WTC11 (cell line): ENCODE measurements at regions of chr16 and their contacts with region 1.

Region 1: GRCh38 chr16:56625140-56625942 is at the start of gene MT1E:
- DNase-seq: peak; percentile 67
- ATAC-seq: peak; percentile 77
- H3K4me3 Mint-ChIP-seq: peak within 1 kb of the TSS; percentile 77
- H3K27ac Mint-ChIP-seq: no peak within 1 kb of the TSS
- H3K4me1 Mint-ChIP-seq: peaks cover 49% of the 10 kb centered on the region
- H3K27me3 Mint-ChIP-seq: peaks cover 98% of the 10 kb centered on the region
- CTCF ChIP-seq: no peak
- total RNA-seq, gene MT1E: 92.7 to 114 TPM (median 103 TPM) in 3 replicates

Region 2: GRCh38 chr16:56608043-56608875 is 17.1 kb before region 1 on chr16 and contains the start of gene MT2A:
- CTCF ChIA-PET with region 1: interaction called, 7 read pairs
- POLR2A ChIA-PET with region 1: interaction called, 68 read pairs
- DNase-seq: peak; percentile 89
- ATAC-seq: peak; percentile 85
- H3K4me3 Mint-ChIP-seq: peak within 1 kb of the TSS; percentile 79
- H3K27ac Mint-ChIP-seq: peak within 1 kb of the TSS; percentile 18; the same call in 1 of the 2 replicates
- H3K4me1 Mint-ChIP-seq: peaks cover 43% of the 10 kb centered on the region
- H3K27me3 Mint-ChIP-seq: peaks cover 68% of the 10 kb centered on the region
- CTCF ChIP-seq: no peak
- total RNA-seq, gene MT2A: 139 to 173 TPM (median 149 TPM) in 3 replicates

Region 3: DNA sequence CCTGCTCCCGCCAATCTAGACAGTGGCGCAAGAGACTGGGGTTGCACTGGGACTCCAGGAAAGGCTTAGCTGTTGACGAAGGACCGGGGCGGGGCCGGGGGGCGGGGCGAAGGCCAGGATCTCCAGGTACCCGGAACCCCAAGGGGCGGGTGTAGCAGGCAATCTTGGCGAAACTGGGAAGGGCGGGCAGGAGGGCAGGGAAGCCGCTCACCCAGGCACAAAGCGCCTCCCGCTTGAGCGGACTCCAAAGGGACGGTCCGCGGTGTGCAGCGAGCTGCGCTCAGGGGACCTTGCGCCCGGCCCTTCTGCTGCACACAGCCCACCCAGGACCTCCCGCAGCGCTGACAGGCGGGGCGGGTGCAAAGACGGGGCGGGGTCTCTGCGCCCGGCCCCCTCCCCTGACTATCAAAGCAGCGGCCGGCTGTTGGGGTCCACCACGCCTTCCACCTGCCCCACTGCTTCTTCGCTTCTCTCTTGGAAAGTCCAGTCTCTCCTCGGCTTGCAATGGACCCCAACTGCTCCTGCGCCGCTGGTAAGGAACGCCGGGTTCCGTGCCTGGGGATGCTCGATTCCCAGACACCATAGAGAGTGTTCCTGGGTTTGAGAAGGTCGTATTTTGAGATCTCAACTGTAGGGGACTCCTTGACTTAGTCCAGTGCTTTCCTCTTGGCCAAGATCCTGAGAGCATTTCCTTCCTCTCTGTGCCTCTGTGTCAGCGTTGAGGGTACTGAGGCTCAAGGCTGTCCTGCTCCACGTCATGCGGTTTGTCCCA is 32.4 kb after region 1 on chr16 and contains the start of gene MT1F:
- CTCF ChIA-PET with region 1: interaction called, 5 read pairs
- POLR2A ChIA-PET with region 1: interaction called, 24 read pairs
- DNase-seq: peak; percentile 92
- ATAC-seq: peak; percentile 88
- H3K4me3 Mint-ChIP-seq: peak within 1 kb of the TSS; percentile 95
- H3K27ac Mint-ChIP-seq: peak within 1 kb of the TSS; percentile 74; the same call in 1 of the 2 replicates
- H3K4me1 Mint-ChIP-seq: peaks cover 26% of the 10 kb centered on the region
- H3K27me3 Mint-ChIP-seq: peaks cover 85% of the 10 kb centered on the region
- CTCF ChIP-seq: no peak
- total RNA-seq, gene MT1F: 50.6 to 60.2 TPM (median 58.2 TPM) in 3 replicates

Region 4: DNA sequence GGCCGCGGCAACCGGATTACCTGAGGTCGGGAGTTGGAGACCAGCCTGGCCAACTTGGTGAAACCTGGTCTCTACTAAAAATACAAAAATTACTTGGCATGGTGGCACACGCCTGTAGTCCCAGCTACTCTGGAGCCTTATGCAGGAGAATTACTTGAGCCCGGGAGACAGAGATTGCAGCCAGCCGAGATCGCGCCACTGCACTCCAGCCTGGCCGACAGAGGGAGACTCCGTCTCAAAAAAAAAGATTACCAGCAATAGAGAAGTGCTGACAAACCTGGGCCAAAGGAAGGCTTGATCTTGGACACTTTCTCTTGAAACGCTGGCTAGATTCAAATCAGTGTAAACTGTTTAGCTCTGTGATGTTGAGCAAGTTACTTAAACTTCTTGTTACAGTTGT is 48.6 kb after region 1 on chr16:
- CTCF ChIA-PET with region 1: interaction called, 4 read pairs
- POLR2A ChIA-PET with region 1: interaction called, 46 read pairs
- DNase-seq: no peak
- ATAC-seq: peak; percentile 24
- H3K4me3 Mint-ChIP-seq: peak overlapping the region; percentile 7; the same call in 1 of the 2 replicates
- H3K27ac Mint-ChIP-seq: peak overlapping the region; percentile 73
- H3K4me1 Mint-ChIP-seq: peaks cover 59% of the 10 kb centered on the region
- H3K27me3 Mint-ChIP-seq: peaks cover 55% of the 10 kb centered on the region
- CTCF ChIP-seq: no peak